GM12878 (cell line): ENCODE measurements at regions of chr5 and their contacts with region 1.

Region 1: GRCh38 chr5:126656396-126657007 is 55.8 kb downstream of the PHAX start:
- DNase-seq: no peak
- ATAC-seq: peak; percentile 22; the same call in 1 of the 3 replicates
- H3K4me3 ChIP-seq: no peak overlapping the region
- H3K27ac ChIP-seq: no peak overlapping the region
- H3K4me1 ChIP-seq: no peaks in the 10 kb centered on the region
- H3K27me3 ChIP-seq: no peaks in the 10 kb centered on the region
- CTCF ChIP-seq: peak; percentile 75 to 88 (median 86)
- EP300 ChIP-seq: no peak
- POLR2A ChIP-seq: no peak
- RAD21 ChIP-seq: peak; percentile 98

Region 2: GRCh38 chr5:126274076-126274762 is 382.3 kb before region 1 on chr5:
- CTCF ChIA-PET with region 1: no interaction called
- POLR2A ChIA-PET with region 1: no interaction called
- RAD21 ChIA-PET with region 1: no interaction called
- SMC1A ChIA-PET with region 1: no interaction called
- in situ Hi-C with region 1: no loop called
- intact Hi-C with region 1: no loop called
- DNase-seq: no peak
- ATAC-seq: no peak
- H3K4me3 ChIP-seq: no peak overlapping the region
- H3K27ac ChIP-seq: no peak overlapping the region
- H3K4me1 ChIP-seq: no peaks in the 10 kb centered on the region
- H3K27me3 ChIP-seq: no peaks in the 10 kb centered on the region
- CTCF ChIP-seq: no peak
- EP300 ChIP-seq: no peak
- POLR2A ChIP-seq: no peak
- RAD21 ChIP-seq: no peak

Region 3: DNA sequence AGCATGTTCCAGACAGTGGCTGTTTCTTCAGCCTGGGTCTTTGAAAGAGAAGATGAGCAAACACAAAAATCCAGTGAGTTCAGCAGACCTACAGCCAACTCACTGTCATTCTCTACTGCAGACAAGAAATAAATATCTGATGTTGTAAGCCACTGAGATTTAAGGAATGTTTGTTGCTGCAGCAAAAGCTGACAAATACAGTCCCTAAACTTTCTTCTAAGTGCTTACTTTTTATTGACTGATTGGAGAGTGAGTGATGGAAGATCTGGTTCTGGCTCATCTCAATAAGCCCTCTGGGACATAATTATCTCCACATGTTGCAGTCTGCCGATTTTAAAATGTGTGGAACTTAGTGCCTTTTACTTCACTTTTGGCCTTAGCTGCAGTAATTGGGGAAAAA is 50.6 kb after region 1 on chr5:
- CTCF ChIA-PET with region 1: no interaction called
- POLR2A ChIA-PET with region 1: no interaction called
- RAD21 ChIA-PET with region 1: no interaction called
- SMC1A ChIA-PET with region 1: no interaction called
- in situ Hi-C with region 1: no loop called
- intact Hi-C with region 1: no loop called
- DNase-seq: no peak
- ATAC-seq: no peak
- H3K4me3 ChIP-seq: no peak overlapping the region
- H3K27ac ChIP-seq: no peak overlapping the region
- H3K4me1 ChIP-seq: no peaks in the 10 kb centered on the region
- H3K27me3 ChIP-seq: no peaks in the 10 kb centered on the region
- CTCF ChIP-seq: no peak
- EP300 ChIP-seq: no peak
- POLR2A ChIP-seq: no peak
- RAD21 ChIP-seq: no peak

Region 4: DNA sequence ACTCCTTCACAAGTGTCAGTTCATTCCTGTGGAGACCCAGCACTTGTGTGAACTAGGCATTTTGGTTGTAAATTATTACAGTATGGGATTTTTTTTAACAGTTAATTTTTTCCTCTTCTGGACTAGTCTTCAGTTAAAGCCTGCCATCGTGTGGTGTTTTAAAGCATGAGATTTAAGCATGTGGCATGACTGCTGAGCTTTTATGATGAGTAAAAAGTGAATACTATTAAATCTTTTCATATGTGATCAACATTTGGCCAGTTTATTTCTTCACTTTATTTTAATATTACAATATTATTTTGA is 145.4 kb after region 1 on chr5:
- CTCF ChIA-PET with region 1: interaction called, 20 read pairs
- POLR2A ChIA-PET with region 1: no interaction called
- RAD21 ChIA-PET with region 1: interaction called, 20 read pairs
- SMC1A ChIA-PET with region 1: interaction called, 20 read pairs
- in situ Hi-C with region 1: no loop called
- intact Hi-C with region 1: no loop called
- DNase-seq: no peak
- ATAC-seq: peak; percentile 68
- H3K4me3 ChIP-seq: no peak overlapping the region
- H3K27ac ChIP-seq: no peak overlapping the region
- H3K4me1 ChIP-seq: peaks cover 7% of the 10 kb centered on the region; the same call in 1 of the 2 replicates
- H3K27me3 ChIP-seq: no peaks in the 10 kb centered on the region
- CTCF ChIP-seq: peak; percentile 39 to 66 (median 49); a peak in 4 of 6 replicates
- EP300 ChIP-seq: no peak
- POLR2A ChIP-seq: no peak
- RAD21 ChIP-seq: peak; percentile 73

Region 5: GRCh38 chr5:127040796-127041520 is 384.5 kb after region 1 on chr5:
- CTCF ChIA-PET with region 1: no interaction called
- POLR2A ChIA-PET with region 1: no interaction called
- RAD21 ChIA-PET with region 1: no interaction called
- SMC1A ChIA-PET with region 1: no interaction called
- in situ Hi-C with region 1: no loop called
- intact Hi-C with region 1: loop called (anchors 10 kb)
- DNase-seq: no peak
- ATAC-seq: no peak
- H3K4me3 ChIP-seq: no peak overlapping the region
- H3K27ac ChIP-seq: no peak overlapping the region
- H3K4me1 ChIP-seq: no peaks in the 10 kb centered on the region
- H3K27me3 ChIP-seq: no peaks in the 10 kb centered on the region
- CTCF ChIP-seq: no peak
- EP300 ChIP-seq: no peak
- POLR2A ChIP-seq: no peak
- RAD21 ChIP-seq: no peak

Region 6: DNA sequence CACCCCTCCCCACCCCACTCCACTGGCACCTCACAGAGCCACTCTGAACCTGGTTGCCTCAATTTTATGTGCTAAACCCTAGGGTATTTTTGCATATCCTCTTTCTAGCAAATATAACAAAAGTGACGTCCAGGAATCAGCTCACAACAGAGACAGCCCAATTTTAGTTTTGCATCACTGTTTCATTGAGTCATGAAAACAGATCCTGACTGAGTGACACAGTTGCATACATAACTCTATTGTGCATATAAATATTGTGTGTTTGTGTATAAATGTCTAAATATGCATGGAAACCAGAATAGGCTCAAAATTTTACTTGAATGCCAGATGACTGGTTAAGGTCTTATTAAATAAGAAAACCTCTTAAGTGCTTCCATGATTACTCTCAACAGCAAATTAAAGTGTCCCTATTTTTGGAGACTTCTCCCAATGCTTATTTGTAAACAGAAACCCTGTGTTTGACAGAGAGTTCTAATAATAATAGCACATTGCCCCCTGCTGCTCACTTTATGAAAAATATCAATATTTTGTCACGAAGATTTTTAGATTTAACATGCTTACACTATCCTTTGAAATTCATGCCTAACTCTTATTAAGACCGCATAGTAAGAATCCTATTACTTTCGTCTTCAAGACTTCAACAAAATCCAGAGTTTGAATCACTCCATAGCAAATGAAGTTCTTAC is 785.4 kb after region 1 on chr5:
- CTCF ChIA-PET with region 1: no interaction called
- POLR2A ChIA-PET with region 1: no interaction called
- RAD21 ChIA-PET with region 1: no interaction called
- SMC1A ChIA-PET with region 1: interaction called, 4 read pairs
- in situ Hi-C with region 1: no loop called
- intact Hi-C with region 1: loop called (anchors 2 kb)
- DNase-seq: no peak
- ATAC-seq: no peak
- H3K4me3 ChIP-seq: no peak overlapping the region
- H3K27ac ChIP-seq: no peak overlapping the region
- H3K4me1 ChIP-seq: no peaks in the 10 kb centered on the region
- H3K27me3 ChIP-seq: no peaks in the 10 kb centered on the region
- CTCF ChIP-seq: peak in 2 of 3 experiments; percentile 24 to 32; a peak in 2 of 6 replicates
- EP300 ChIP-seq: no peak
- POLR2A ChIP-seq: no peak
- RAD21 ChIP-seq: peak; percentile 72